BJ (cell line): ENCODE measurements at regions of chr7 and their contacts with region 1.

Region 1: DNA sequence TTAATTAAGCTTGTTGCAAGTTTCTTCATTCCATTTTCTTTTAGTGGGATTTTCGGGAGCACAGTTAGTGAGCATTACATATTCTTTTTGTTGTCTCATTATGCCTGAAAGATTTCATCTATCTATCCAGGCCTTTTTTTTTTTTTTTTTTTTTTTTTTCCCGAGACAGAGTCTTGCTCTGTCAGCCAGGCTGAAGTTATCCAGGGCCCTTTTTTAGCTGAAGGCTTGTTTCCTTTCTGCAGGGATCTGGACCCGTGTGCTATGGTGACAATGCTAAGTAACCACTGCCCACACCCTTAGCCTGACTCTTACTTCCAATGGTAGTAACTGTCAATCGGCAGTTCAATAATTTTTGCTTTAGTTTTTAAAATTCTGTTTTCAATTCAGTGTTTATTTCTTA is 190.8 kb upstream of the MTPN start:
- DNase-seq: no peak
- H3K4me3 ChIP-seq: no peak overlapping the region
- H3K27me3 ChIP-seq: no peaks in the 10 kb centered on the region
- CTCF ChIP-seq: no peak

Region 2: GRCh38 chr7:136055266-136055665 is 112.7 kb before region 1 on chr7:
- CTCF ChIA-PET with region 1: no interaction called
- POLR2A ChIA-PET with region 1: interaction called, 10 read pairs
- DNase-seq: no peak
- H3K4me3 ChIP-seq: no peak overlapping the region
- H3K27me3 ChIP-seq: no peaks in the 10 kb centered on the region
- CTCF ChIP-seq: no peak